BJ (cell line): ENCODE measurements at regions of chr17 and their contacts with region 1.

Region 1: GRCh38 chr17:50151041-50151936 is 812 bp upstream of the PPP1R9B start:
- DNase-seq: no peak
- H3K4me3 ChIP-seq: peak overlapping the region; percentile 67
- H3K27me3 ChIP-seq: no peaks in the 10 kb centered on the region
- CTCF ChIP-seq: peak; percentile 75

Region 2: GRCh38 chr17:49788478-49789242 is 362.6 kb before region 1 on chr17 and contains the start of gene KAT7:
- CTCF ChIA-PET with region 1: no interaction called
- POLR2A ChIA-PET with region 1: interaction called, 10 read pairs
- DNase-seq: peak; percentile 97
- H3K4me3 ChIP-seq: peak within 1 kb of the TSS; percentile 98
- H3K27me3 ChIP-seq: no peaks in the 10 kb centered on the region
- CTCF ChIP-seq: no peak
- polyA plus RNA-seq, gene KAT7: 19.5 and 23.0 TPM in 2 replicates

Region 3: GRCh38 chr17:49987681-49988441 is 163.4 kb before region 1 on chr17:
- CTCF ChIA-PET with region 1: no interaction called
- POLR2A ChIA-PET with region 1: no interaction called
- DNase-seq: no peak
- H3K4me3 ChIP-seq: no peak overlapping the region
- H3K27me3 ChIP-seq: peaks cover 18% of the 10 kb centered on the region
- CTCF ChIP-seq: no peak

Region 4: DNA sequence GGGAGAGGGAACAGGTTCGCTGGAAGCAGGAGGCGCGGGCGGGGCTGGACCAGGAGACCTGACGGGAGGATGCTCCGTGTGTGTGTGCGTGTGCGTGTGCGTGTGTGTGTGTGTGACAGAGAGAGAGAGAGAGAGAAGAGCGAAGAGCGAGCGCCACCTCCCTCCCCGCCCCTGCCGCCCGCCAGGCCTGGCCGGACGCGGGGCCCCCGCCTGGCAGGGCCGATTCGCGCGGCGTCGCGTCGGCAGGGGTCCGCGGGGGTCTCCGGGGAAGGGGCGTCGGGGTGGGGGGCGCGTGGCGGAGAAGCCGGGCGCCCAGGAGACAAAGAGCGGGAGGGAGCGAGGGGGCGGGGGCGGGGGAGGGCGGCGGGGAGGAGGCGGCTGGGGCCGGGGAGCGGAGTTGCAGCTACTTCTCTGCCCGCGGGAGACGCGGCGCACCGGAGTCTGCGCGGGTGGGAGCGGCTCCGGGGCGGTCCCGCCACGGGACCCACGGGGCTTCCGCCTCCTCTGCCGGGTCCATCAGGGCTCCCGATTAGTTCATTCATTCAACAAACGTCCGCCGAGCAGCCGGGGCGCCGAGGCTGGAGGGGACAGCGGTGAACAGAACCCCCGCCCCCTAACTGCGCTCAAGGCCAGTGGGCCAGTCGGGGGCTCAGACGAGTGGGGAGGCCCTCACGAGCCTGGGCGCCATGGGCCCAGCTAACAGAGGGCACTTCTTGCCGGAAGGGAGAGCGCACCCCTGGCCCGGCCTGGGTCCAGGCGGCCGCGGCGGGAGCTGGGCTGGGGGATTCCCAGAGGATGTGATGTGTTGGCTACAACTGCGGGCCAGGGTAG is 21.3 kb before region 1 on chr17 and contains the start of gene SAMD14:
- CTCF ChIA-PET with region 1: interaction called, 20 read pairs
- POLR2A ChIA-PET with region 1: interaction called, 4 read pairs
- DNase-seq: no peak
- H3K4me3 ChIP-seq: peak within 1 kb of the TSS; percentile 54
- H3K27me3 ChIP-seq: no peaks in the 10 kb centered on the region
- CTCF ChIP-seq: no peak
- polyA plus RNA-seq, gene SAMD14: 2.7 and 5.3 TPM in 2 replicates

Region 5: GRCh38 chr17:50139950-50140871 is 11.1 kb before region 1 on chr17:
- CTCF ChIA-PET with region 1: interaction called, 30 read pairs
- POLR2A ChIA-PET with region 1: no interaction called
- DNase-seq: no peak
- H3K4me3 ChIP-seq: no peak overlapping the region
- H3K27me3 ChIP-seq: no peaks in the 10 kb centered on the region
- CTCF ChIP-seq: peak; percentile 95

Region 6: GRCh38 chr17:50345432-50346312 is 194.4 kb after region 1 on chr17 and contains the start of gene XYLT2:
- CTCF ChIA-PET with region 1: no interaction called
- POLR2A ChIA-PET with region 1: no interaction called
- DNase-seq: no peak
- H3K4me3 ChIP-seq: peak within 1 kb of the TSS; percentile 92
- H3K27me3 ChIP-seq: no peaks in the 10 kb centered on the region
- CTCF ChIP-seq: no peak
- polyA plus RNA-seq, gene XYLT2: 15.4 and 25.0 TPM in 2 replicates